Aorta (tissue), 5 donors: ENCODE measurements at regions of chr4 and their contacts with region 1.

Region 1: DNA sequence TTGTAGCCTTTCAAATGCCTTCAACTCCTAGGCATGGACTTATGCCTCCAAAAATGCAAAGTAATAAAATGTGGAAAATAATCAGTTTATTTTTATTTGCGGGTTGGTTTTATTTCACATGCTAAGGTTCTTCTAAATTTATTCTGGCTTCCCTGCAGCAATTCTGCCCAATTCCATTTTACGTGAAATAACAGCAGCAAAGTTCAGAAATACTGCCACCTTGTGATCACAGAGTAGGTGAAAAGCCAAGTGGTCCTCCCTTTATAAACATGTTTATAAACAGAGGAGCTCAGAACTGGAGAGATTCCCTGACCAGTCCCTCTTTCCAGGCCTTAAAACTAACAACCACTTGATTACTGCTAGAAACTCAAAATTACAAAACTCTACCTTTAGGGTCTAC is 14.7 kb upstream of the DCHS2 start:
- DNase-seq: no peak
- ATAC-seq: no peak
- H3K4me3 ChIP-seq: no peak overlapping the region
- H3K27ac ChIP-seq: no peak overlapping the region
- H3K4me1 ChIP-seq: no peaks in the 10 kb centered on the region
- H3K27me3 ChIP-seq: no peaks in the 10 kb centered on the region

Region 2: DNA sequence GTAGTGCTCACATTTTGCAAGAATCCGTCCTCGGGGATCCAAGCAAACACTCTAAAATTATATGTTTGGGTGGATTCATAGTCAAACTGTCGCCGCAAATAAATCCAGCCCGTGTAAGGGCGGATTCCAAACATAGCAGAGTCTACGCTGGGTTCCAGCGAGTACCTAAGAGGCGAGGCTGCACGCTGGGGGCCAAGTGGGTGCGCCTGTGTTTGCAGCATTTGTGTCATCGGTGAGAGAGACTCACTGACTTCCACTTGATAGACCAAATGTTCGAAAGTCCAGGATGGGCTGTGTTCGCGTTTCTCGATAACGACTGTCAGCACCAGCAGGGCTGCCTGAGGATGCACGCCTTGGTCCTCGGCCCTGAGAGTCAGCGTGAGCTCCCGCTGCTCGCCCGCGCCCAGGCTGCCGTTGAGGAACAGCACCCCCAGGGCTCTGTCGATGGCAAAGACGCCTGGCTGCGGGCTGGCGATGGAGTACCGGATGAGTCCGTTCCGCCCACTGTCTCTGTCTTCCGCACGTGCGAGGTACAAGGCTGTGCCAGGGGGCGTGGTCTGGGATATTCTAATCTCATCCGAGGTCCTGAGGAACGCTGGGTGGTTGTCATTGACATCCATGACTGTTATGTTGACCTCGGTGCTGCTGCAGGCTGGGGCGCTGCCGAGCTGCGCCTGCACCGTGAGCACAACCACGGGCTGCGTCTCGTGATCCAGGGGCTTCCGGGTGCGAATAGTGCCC is 173.4 kb before region 1 on chr4:
- intact Hi-C with region 1: loop called (anchors 2 to 10 kb)
- DNase-seq: peak in 1 of 2 donors; percentile 47
- ATAC-seq: peak; percentile 55
- H3K4me3 ChIP-seq: peak overlapping the region in 1 of 2 donors; percentile 22
- H3K27ac ChIP-seq: no peak overlapping the region
- H3K4me1 ChIP-seq: no peaks in the 10 kb centered on the region
- H3K27me3 ChIP-seq: no peaks in the 10 kb centered on the region

Region 3: GRCh38 chr4:154399259-154399974 is 106.8 kb before region 1 on chr4:
- intact Hi-C with region 1: loop called in 1 of 2 experiments (anchors 5 kb)
- DNase-seq: no peak
- ATAC-seq: peak; percentile 63
- H3K4me3 ChIP-seq: no peak overlapping the region
- H3K27ac ChIP-seq: no peak overlapping the region
- H3K4me1 ChIP-seq: no peaks in the 10 kb centered on the region
- H3K27me3 ChIP-seq: no peaks in the 10 kb centered on the region